ENCODE measurements at regions of chr3 and their contacts with region 1.

Region 1: GRCh38 chr3:122679085-122679881 is 1.4 kb upstream of the PARP14 start:
- DNase-seq: peak; percentile 79
- ATAC-seq: peak; percentile 74
- H3K4me3 ChIP-seq: peak overlapping the region; percentile 28
- H3K27ac ChIP-seq: peak overlapping the region; percentile 9; the same call in 1 of the 2 replicates
- H3K4me1 ChIP-seq: peaks cover 13% of the 10 kb centered on the region
- H3K27me3 ChIP-seq: no peaks in the 10 kb centered on the region
- CTCF ChIP-seq: peak; percentile 89
- POLR2A ChIP-seq: no peak
- RAD21 ChIP-seq: peak; percentile 87

Region 2: GRCh38 chr3:122392868-122393844 is 286.1 kb before region 1 on chr3:
- CTCF ChIA-PET with region 1: no interaction called
- POLR2A ChIA-PET with region 1: no interaction called
- dilution Hi-C with region 1: no loop called
- in situ Hi-C with region 1: loop called (anchors 10 kb)
- intact Hi-C with region 1: loop called (anchors 1 kb)
- DNase-seq: peak; percentile 66
- ATAC-seq: peak; percentile 55; the same call in 1 of the 2 replicates
- H3K4me3 ChIP-seq: no peak overlapping the region
- H3K27ac ChIP-seq: no peak overlapping the region
- H3K4me1 ChIP-seq: peaks cover 5% of the 10 kb centered on the region
- H3K27me3 ChIP-seq: no peaks in the 10 kb centered on the region
- CTCF ChIP-seq: peak; percentile 74
- POLR2A ChIP-seq: no peak
- RAD21 ChIP-seq: peak; percentile 71

Region 3: GRCh38 chr3:122555275-122556071 is 123.8 kb before region 1 on chr3:
- CTCF ChIA-PET with region 1: interaction called, 34 read pairs
- POLR2A ChIA-PET with region 1: no interaction called
- dilution Hi-C with region 1: no loop called
- in situ Hi-C with region 1: loop called (anchors 5 kb)
- intact Hi-C with region 1: loop called (anchors 1 kb)
- DNase-seq: peak; percentile 57
- ATAC-seq: peak; percentile 79
- H3K4me3 ChIP-seq: no peak overlapping the region
- H3K27ac ChIP-seq: no peak overlapping the region
- H3K4me1 ChIP-seq: peaks cover 3% of the 10 kb centered on the region; the same call in 1 of the 2 replicates
- H3K27me3 ChIP-seq: no peaks in the 10 kb centered on the region
- CTCF ChIP-seq: no peak
- POLR2A ChIP-seq: no peak
- RAD21 ChIP-seq: no peak

Region 4: DNA sequence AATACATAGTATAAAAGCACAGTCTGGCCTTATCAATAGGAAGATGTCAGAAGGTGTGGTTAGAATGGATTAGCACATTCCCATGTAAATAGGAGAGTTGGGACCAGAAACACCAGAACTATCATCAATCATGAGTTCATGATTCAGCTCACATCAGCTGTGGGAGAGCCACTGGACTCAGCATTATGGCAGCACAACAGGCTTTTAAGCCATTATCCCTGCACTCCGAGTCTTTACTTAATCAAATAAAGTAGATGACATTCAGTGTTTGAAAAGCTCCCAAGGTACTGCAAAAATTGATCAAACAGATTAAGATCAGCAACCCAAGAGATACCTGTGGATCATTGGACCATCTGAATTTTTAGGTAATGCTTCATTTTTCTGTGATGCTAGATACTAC is 26.1 kb after region 1 on chr3:
- CTCF ChIA-PET with region 1: no interaction called
- POLR2A ChIA-PET with region 1: no interaction called
- dilution Hi-C with region 1: no loop called
- in situ Hi-C with region 1: no loop called
- intact Hi-C with region 1: no loop called
- DNase-seq: no peak
- ATAC-seq: no peak
- H3K4me3 ChIP-seq: no peak overlapping the region
- H3K27ac ChIP-seq: no peak overlapping the region
- H3K4me1 ChIP-seq: no peaks in the 10 kb centered on the region
- H3K27me3 ChIP-seq: no peaks in the 10 kb centered on the region
- CTCF ChIP-seq: no peak
- POLR2A ChIP-seq: no peak
- RAD21 ChIP-seq: no peak

Region 5: DNA sequence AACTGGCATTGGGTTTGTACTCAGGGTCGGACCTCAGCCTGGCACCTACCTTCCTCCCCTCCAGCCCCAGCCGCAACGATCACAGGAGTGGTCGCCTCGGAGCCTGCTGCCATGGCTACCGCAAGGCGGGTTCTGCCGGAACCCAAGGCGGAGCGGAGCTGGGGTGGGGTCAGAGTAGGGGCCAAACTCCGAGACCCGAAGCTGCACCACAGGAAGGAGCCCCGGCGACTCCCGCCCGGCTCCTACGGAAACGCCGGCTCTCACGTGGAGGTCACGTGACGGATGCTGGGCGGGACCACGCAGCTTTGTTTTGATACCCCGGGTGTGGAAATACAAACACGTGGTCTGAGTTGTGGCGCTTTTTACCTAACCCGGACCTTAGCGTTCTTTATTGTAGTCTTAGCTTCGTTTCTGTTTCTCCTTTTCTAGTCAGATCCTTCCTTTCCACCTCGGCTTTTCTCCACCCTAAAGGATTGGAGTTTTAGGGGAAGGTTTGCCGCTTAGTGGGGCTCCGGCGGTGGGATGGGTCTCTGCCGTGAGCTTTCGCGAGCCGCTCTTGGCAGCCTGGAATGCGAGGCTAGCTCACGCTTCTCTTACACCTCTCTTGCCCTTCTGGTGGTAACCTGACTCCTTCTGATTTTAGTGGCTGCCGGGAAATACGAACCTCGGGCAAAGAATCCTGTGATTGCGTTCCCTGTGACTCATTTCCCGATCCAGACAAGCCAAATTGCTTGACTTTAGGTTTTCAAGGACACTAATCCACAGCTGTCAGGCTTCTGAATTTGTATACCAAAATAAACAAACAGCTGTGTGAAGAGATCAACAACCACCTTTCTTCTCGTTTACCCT is 114.5 kb after region 1 on chr3 and contains the start of gene HSPBAP1:
- CTCF ChIA-PET with region 1: no interaction called
- POLR2A ChIA-PET with region 1: no interaction called
- dilution Hi-C with region 1: no loop called
- in situ Hi-C with region 1: no loop called
- intact Hi-C with region 1: loop called (anchors 10 kb)
- DNase-seq: peak; percentile 91
- ATAC-seq: peak; percentile 60
- H3K4me3 ChIP-seq: peak within 1 kb of the TSS; percentile 90
- H3K27ac ChIP-seq: peak within 1 kb of the TSS; percentile 93
- H3K4me1 ChIP-seq: no peaks in the 10 kb centered on the region; the same call in 1 of the 2 replicates
- H3K27me3 ChIP-seq: no peaks in the 10 kb centered on the region
- CTCF ChIP-seq: no peak
- POLR2A ChIP-seq: peak; percentile 79; the same call in 1 of the 2 replicates
- RAD21 ChIP-seq: no peak
- total RNA-seq, gene HSPBAP1: 4.4 and 4.8 TPM in 2 replicates

Measured in IMR-90 (cell line).